ENCODE measurements at regions of chr9 and their contacts with region 1.

Region 1: DNA sequence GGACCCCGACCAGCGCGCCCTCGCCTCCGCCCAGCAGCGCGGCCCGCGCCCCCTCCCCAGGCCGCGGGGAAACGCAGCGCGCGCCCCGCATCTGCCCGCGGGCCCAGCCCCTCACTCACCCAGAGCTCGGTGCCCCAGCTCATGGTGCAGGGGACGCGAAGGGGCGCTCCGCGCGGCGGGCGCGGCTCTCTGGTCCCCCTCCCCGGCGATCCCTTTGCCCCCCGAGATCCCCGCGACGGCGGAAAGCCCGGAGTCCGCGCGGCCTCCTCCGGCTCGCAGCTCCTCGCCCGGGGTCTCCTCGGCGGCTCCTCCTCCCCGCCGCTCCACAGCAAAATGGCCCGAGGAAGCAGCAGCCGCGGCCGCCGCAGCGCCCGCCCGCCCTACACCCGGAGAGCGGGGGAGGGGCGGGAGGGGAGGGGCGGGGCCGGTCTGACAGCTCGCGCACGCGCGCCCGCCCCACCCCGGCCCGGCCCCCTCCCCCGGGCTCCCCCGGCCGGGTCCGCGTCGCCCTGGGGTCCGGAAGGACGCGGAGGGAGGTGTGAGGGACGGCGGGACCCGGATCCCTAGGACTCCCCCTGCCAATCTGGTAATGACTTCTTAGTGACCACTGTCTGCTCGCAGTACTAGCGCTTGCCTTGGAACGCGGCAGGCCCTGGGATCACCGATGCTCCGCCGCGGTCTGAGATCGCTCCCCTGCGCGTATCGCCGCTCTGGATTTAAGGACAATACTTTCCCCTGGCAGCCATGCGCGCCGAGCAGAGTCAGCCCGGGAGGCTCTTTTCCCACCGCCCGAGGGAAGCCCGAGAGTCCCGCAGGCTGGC is at the start of gene FNBP1:
- DNase-seq: peak; percentile 80
- H3K4me3 ChIP-seq: peak within 1 kb of the TSS; percentile 68 to 92 (median 81)
- H3K27ac ChIP-seq: peak within 1 kb of the TSS; percentile 14
- H3K4me1 ChIP-seq: peaks cover 30% of the 10 kb centered on the region
- H3K27me3 ChIP-seq: no peaks in the 10 kb centered on the region
- CTCF ChIP-seq: no peak
- POLR2A ChIP-seq: no peak
- total RNA-seq, gene FNBP1: 36.2 and 43.9 TPM in 2 replicates

Region 2: GRCh38 chr9:129835021-129835871 is 207.8 kb before region 1 on chr9 and contains the starts of genes C9orf78 and USP20:
- CTCF ChIA-PET with region 1: no interaction called
- POLR2A ChIA-PET with region 1: interaction called, 3 read pairs
- dilution Hi-C with region 1: no loop called
- intact Hi-C with region 1: loop called (anchors 2 kb)
- DNase-seq: peak; percentile 96
- H3K4me3 ChIP-seq: peak within 1 kb of the TSS; percentile 60 to 82 (median 65)
- H3K27ac ChIP-seq: peak within 1 kb of the TSS; percentile 18
- H3K4me1 ChIP-seq: peaks cover 15% of the 10 kb centered on the region
- H3K27me3 ChIP-seq: no peaks in the 10 kb centered on the region
- CTCF ChIP-seq: no peak
- POLR2A ChIP-seq: peak; percentile 97
- total RNA-seq, gene C9orf78: 34.6 and 34.7 TPM in 2 replicates
- total RNA-seq, gene USP20: 13.4 and 17.4 TPM in 2 replicates

Region 3: DNA sequence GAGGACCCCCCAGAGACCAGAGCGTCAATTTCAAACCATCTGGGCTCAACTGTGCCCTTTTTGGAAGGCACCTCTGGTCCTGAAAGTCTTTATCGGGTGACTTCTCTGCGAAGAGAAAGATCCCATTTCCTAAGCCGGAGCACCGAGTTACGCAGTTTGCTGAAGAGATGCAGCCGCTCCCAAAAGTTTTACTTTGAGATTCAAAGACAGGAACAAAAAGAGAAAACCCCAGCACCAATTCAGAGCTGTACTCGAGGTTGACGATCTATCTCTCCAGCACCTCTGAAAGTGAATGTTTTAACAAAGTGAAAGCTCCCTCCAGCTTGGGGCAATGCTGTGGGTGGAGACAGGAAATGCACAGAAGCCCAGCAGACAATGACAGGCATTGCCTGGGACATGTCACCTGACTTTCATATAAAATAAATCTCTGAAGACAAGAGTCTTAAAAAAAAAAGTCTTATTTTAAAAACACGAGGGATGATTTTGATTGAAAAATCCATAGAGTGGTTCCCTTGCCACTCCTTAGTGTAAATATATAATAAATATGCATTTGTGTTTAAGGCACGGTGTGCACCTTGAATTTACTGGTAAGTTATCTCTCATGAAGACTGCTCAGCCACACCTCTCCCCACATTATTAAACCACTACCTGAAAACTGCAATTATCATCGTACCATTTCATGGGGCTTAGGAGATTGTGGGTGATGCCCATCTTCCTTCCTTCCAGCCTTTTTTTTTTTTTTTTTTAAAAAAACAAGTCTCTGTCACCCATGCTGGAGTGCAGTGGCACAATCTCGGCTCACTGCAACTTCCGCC is 79.9 kb before region 1 on chr9:
- CTCF ChIA-PET with region 1: interaction called, 5 read pairs
- POLR2A ChIA-PET with region 1: no interaction called
- dilution Hi-C with region 1: no loop called
- intact Hi-C with region 1: loop called (anchors 2 kb)
- DNase-seq: peak; percentile 70
- H3K4me3 ChIP-seq: peak overlapping the region; percentile 30 to 93 (median 86)
- H3K27ac ChIP-seq: peak overlapping the region; percentile 76
- H3K4me1 ChIP-seq: peaks cover 30% of the 10 kb centered on the region
- H3K27me3 ChIP-seq: no peaks in the 10 kb centered on the region
- CTCF ChIP-seq: no peak
- POLR2A ChIP-seq: peak; percentile 37

Region 4: DNA sequence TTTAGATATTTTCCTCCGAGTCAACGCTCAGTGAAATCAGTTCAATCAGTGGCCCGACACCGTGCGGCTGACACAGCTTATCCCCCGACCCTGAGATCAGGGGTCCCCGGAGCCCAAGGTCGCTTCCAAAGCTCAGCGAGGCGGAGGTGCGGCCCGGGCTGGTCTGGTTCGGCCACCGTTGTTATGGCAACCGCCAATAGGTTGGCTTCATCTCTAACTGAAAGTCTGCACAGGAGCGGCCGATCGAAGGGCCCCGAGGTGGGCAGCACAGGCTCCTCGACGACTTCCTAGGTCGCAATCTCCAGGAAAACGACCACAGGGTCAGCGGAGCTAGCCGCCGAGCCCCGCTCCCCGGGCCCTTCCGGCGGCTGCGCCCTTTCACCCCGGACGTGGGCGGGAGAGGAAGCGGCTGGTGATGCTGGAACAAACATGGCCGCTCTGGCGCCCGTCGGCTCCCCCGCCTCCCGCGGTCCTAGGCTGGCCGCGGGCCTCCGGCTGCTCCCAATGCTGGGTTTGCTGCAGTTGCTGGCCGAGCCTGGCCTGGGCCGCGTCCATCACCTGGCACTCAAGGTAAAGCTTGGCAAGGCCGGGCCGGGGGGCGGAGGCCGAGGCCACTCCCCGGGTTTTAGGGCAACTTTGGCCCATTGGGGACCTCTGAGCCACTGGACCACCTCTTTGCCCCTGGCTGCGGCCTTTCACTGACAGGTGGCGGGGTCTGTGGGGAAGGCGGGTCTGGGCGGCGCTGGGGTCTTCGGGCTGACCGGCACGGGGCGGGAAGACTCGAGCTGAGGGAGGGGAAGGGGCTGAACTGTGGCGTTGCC is 10.7 kb after region 1 on chr9 and contains the start of gene GPR107:
- CTCF ChIA-PET with region 1: interaction called, 8 read pairs
- POLR2A ChIA-PET with region 1: interaction called, 5 read pairs
- dilution Hi-C with region 1: no loop called
- intact Hi-C with region 1: loop called (anchors 1 kb)
- DNase-seq: peak; percentile 78
- H3K4me3 ChIP-seq: peak within 1 kb of the TSS; percentile 73 to 98 (median 96)
- H3K27ac ChIP-seq: peak within 1 kb of the TSS; percentile 94
- H3K4me1 ChIP-seq: peaks cover 15% of the 10 kb centered on the region
- H3K27me3 ChIP-seq: no peaks in the 10 kb centered on the region
- CTCF ChIP-seq: no peak
- POLR2A ChIP-seq: peak; percentile 92
- total RNA-seq, gene GPR107: 38.9 and 41.5 TPM in 2 replicates

Region 5: DNA sequence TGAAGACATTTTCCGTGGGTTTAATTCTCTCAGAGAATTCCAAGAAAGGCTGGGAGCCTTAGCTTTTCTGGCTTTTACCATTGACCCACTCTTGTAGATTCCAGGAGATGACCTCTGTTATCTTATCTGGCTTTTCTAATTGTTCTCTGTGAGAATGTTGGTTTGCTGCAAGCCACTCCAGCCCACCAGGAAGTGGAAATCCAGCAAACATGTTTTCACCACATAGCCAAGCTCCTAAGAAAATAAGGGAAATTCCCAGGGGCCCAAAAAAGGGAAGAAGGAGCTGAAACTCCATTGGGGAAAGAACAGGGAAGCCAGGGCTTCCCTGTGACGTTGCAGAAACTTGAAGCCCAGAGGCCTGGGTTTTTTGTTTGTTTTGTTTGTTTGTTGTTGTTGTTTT is 30.3 kb after region 1 on chr9:
- CTCF ChIA-PET with region 1: interaction called, 3 read pairs
- POLR2A ChIA-PET with region 1: interaction called, 5 read pairs
- dilution Hi-C with region 1: no loop called
- intact Hi-C with region 1: loop called (anchors 2 kb)
- DNase-seq: peak; percentile 94
- H3K4me3 ChIP-seq: no peak overlapping the region
- H3K27ac ChIP-seq: peak overlapping the region; percentile 88
- H3K4me1 ChIP-seq: peaks cover 33% of the 10 kb centered on the region
- H3K27me3 ChIP-seq: no peaks in the 10 kb centered on the region
- CTCF ChIP-seq: no peak
- POLR2A ChIP-seq: no peak

Region 6: GRCh38 chr9:130095872-130096271 is 52.8 kb after region 1 on chr9:
- CTCF ChIA-PET with region 1: interaction called, 3 read pairs
- POLR2A ChIA-PET with region 1: no interaction called
- dilution Hi-C with region 1: no loop called
- intact Hi-C with region 1: loop called (anchors 5 kb)
- DNase-seq: no peak
- H3K4me3 ChIP-seq: no peak overlapping the region
- H3K27ac ChIP-seq: no peak overlapping the region
- H3K4me1 ChIP-seq: peaks cover 4% of the 10 kb centered on the region
- H3K27me3 ChIP-seq: no peaks in the 10 kb centered on the region
- CTCF ChIP-seq: no peak
- POLR2A ChIP-seq: no peak

Measured in endothelial cell of umbilical vein (primary cell).